ENCODE measurements at regions of chr3 and their contacts with region 1.

Region 1: DNA sequence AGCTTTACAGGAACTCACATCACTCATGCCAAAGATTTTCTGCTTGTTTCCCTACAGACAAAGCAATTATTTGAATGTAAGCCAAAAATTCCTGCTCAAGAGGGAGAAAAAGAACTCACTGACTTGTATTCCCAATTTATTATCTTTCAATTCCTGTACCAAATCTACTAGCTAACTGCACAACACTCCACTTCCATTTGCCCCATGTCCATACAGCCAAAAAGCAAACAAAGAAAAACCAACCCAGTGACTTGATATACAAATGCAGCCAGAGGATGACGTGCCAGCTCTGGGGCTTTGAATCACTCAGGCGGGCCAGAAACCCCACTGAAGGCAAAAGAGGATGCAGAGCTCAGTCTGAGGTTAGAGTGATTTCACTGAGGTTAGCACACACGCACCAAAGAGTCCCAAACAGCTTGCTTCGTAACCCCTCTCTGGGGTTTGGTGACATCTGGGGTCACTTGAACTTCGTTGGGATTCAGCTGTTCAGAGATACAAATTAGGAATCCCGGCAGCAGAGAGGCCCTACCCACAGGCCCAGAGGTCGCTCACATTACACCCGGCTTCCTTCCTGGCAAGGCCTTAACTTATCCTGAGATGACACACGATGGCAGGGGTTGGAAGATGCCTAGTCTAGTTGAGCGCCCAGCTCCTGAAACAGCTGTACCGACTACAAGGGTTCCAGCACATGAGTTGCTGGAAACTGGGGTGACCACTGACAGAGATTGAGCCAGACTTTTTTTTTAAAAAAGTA is 1.6 kb downstream of the RFTN1 start:
- DNase-seq: peak; percentile 79
- H3K4me3 Mint-ChIP-seq: peak overlapping the region; percentile 97
- H3K27ac Mint-ChIP-seq: peak overlapping the region; percentile 89
- H3K4me1 Mint-ChIP-seq: peaks cover 83% of the 10 kb centered on the region
- H3K27me3 Mint-ChIP-seq: no peaks in the 10 kb centered on the region

Region 2: GRCh38 chr3:15361494-15362212 is 1150.2 kb before region 1 on chr3:
- intact Hi-C with region 1: loop called (anchors 2 kb)
- DNase-seq: peak; percentile 29
- H3K4me3 Mint-ChIP-seq: peak overlapping the region; percentile 38
- H3K27ac Mint-ChIP-seq: peak overlapping the region; percentile 80
- H3K4me1 Mint-ChIP-seq: peaks cover 51% of the 10 kb centered on the region
- H3K27me3 Mint-ChIP-seq: no peaks in the 10 kb centered on the region

Region 3: GRCh38 chr3:16300881-16301359 is 210.9 kb before region 1 on chr3:
- intact Hi-C with region 1: loop called (anchors 2 kb)
- DNase-seq: peak; percentile 63
- H3K4me3 Mint-ChIP-seq: peak overlapping the region; percentile 87
- H3K27ac Mint-ChIP-seq: peak overlapping the region; percentile 95
- H3K4me1 Mint-ChIP-seq: peaks cover 96% of the 10 kb centered on the region
- H3K27me3 Mint-ChIP-seq: no peaks in the 10 kb centered on the region

Region 4: GRCh38 chr3:16467393-16467792 is 44.5 kb before region 1 on chr3:
- intact Hi-C with region 1: loop called (anchors 2 kb)
- DNase-seq: peak; percentile 58
- H3K4me3 Mint-ChIP-seq: peak overlapping the region; percentile 76
- H3K27ac Mint-ChIP-seq: peak overlapping the region; percentile 92
- H3K4me1 Mint-ChIP-seq: peaks cover 80% of the 10 kb centered on the region
- H3K27me3 Mint-ChIP-seq: no peaks in the 10 kb centered on the region

Region 5: GRCh38 chr3:16496408-16497222 is 15.2 kb before region 1 on chr3:
- intact Hi-C with region 1: loop called (anchors 1 kb)
- DNase-seq: no peak
- H3K4me3 Mint-ChIP-seq: peak overlapping the region; percentile 38
- H3K27ac Mint-ChIP-seq: peak overlapping the region; percentile 79
- H3K4me1 Mint-ChIP-seq: peaks cover 65% of the 10 kb centered on the region
- H3K27me3 Mint-ChIP-seq: no peaks in the 10 kb centered on the region

Region 6: DNA sequence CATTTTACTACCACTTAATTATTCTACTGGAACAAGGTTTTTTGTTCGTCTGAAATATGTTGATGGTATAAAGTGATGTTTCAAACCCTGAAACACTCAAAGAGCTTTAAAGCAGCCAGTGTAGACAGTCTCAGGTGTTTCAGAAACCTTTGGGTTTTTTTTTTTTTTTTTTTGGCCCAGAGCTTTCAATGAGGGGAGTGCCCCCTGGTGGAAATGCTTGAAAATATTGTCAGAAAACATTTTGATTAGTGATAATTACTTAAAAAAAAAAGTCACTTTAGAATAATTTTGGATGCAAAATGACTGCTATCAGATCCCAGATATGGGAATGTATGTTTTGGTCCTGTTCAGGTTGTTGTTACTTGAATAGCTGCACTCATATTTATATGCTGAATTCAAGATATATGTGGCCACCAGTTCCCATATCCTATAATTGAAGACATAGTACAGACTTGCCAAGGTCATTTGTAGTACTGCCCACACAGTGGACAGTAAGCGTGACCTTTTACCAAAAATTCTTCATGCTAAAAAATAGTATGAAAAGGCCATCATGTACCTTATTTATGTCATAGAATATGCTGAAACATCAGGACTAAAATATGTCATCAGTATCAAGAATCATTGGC is 1877.4 kb after region 1 on chr3:
- intact Hi-C with region 1: no loop called
- DNase-seq: no peak
- H3K4me3 Mint-ChIP-seq: no peak overlapping the region
- H3K27ac Mint-ChIP-seq: no peak overlapping the region
- H3K4me1 Mint-ChIP-seq: peaks cover 81% of the 10 kb centered on the region
- H3K27me3 Mint-ChIP-seq: no peaks in the 10 kb centered on the region

Region 7: DNA sequence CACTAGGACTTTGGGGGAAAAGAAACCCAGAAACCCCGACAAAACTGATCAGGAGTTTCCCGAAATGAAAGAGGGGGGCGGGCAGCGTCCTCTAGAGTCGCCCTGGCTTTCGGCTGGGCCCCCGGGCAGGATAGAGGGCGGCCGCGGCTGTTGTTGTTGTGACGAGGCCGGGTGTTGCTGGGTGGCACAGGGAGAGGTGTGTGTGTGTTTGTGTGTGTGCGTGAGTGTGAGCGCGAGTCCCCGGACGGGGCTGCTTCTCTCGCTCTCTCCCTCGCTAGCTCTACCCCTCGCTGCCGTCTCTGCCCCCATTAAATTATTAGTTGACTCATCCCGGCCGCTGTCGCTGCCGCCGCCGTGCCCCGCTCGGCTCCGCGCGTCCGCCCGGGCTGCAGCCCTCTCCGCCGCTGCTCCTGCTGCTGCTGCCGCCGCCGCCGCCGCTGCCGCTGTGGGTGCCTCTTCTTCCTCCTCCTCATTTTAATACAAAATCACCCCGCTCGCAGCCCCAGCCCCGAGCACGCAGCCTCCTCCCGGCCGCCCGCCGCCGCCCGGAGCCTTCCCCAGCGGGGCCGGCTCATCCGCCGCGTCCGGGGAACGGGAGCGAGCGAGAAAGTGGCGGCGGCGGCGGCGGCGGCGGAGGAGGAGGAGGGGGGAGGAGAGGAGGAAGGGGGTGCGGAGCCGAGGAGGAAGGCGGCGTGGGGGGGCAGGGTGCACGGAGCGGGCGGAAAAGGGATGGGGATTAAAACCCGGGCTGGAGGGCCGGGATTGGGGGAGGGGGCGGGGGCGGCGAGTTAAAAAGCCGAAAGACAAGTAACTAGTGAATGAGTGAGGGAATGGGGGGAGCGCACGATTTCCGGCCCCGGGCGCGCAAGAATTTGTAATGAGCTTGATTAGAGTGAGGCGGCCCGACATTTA is 1913.1 kb after region 1 on chr3 and contains the start of gene SATB1:
- intact Hi-C with region 1: loop called (anchors 10 kb)
- DNase-seq: peak; percentile 54
- H3K4me3 Mint-ChIP-seq: peak within 1 kb of the TSS; percentile 91
- H3K27ac Mint-ChIP-seq: peak within 1 kb of the TSS; percentile 94
- H3K4me1 Mint-ChIP-seq: peaks cover 72% of the 10 kb centered on the region
- H3K27me3 Mint-ChIP-seq: peaks cover 6% of the 10 kb centered on the region
- total RNA-seq, gene SATB1: 679 and 686 TPM in 2 replicates